ENCODE measurements at regions of chr20 and their contacts with region 1.

Region 1: GRCh38 chr20:44222633-44223368 is 12.2 kb upstream of the OSER1 start:
- DNase-seq: no peak
- H3K4me3 ChIP-seq: no peak overlapping the region
- H3K27ac ChIP-seq: no peak overlapping the region
- H3K4me1 ChIP-seq: peaks cover 0 to 4% (median 0%) of the 10 kb centered on the region in 4 donors
- H3K27me3 ChIP-seq: no peaks in the 10 kb centered on the region
- CTCF ChIP-seq: no peak

Region 2: DNA sequence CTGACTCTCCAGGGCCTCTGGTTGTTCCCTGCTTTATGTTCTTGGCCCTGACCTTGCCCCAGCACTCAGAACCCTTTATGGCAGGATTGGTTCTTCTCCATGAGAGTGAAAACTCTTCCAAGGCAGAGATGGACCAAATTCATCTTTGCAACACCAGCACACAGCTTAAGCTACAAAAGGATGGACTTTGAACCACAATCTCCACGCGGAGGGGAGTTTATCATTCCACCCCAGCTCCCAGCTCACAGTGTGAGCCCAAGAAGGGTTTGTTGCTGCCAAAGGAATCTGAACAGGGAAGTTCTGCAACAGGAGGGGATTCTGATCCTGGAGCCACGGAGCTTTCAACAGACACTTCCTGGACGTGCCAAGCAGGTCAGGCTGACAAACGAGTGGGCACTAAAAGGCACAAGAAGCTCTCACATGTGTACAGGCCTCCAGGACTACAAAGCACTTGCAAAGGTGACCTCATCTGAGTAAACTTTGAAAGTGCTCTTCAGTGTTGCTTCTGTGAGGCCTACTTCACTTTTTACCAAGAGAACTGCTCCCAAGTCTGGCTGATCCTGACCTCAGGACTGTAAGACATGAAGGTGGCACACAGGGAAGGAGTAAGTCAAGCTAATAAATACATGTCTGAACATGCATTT is 79.3 kb after region 1 on chr20:
- intact Hi-C with region 1: loop called (anchors 5 kb)
- DNase-seq: no peak
- H3K4me3 ChIP-seq: no peak overlapping the region
- H3K27ac ChIP-seq: no peak overlapping the region
- H3K4me1 ChIP-seq: no peaks in the 10 kb centered on the region
- H3K27me3 ChIP-seq: no peaks in the 10 kb centered on the region
- CTCF ChIP-seq: no peak

Measured in tibial artery (tissue), 4 donors.